ENCODE measurements at regions of chr18 and their contacts with region 1.

Region 1: GRCh38 chr18:42229211-42230210 is 274.5 kb downstream of the PIK3C3 start:
- DNase-seq: no peak
- ATAC-seq: peak in 1 of 8 donors; percentile 16
- H3K4me3 ChIP-seq: no peak overlapping the region
- H3K27ac ChIP-seq: no peak overlapping the region
- H3K4me1 ChIP-seq: no peaks in the 10 kb centered on the region
- H3K27me3 ChIP-seq: no peaks in the 10 kb centered on the region
- CTCF ChIP-seq: no peak

Region 2: GRCh38 chr18:41992066-41992465 is 237.4 kb before region 1 on chr18:
- intact Hi-C with region 1: no loop called
- DNase-seq: no peak
- ATAC-seq: no peak
- H3K4me3 ChIP-seq: no peak overlapping the region
- H3K27ac ChIP-seq: no peak overlapping the region
- H3K4me1 ChIP-seq: no peaks in the 10 kb centered on the region
- H3K27me3 ChIP-seq: no peaks in the 10 kb centered on the region
- CTCF ChIP-seq: no peak

Region 3: DNA sequence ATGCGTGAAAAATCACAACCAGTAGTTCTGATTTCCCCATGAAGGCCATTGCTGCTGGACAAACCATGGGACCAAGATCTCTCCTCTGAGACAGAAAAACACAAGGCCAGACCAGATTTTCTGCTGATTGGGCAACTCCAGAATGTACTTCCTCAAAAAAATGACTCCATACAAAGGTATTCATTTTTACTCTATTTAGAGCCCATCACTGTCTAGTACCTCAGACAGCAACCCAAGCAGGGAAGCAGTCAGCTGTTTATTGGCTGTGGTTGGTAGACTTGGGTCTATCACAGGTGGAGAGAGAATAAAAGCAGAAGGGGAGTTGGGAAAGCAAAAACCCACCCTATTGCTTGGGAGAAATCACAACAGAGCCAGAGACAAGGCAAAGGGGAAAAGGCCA is 54.6 kb before region 1 on chr18:
- intact Hi-C with region 1: loop called in 1 of 10 experiments (anchors 10 kb)
- DNase-seq: no peak
- ATAC-seq: no peak
- H3K4me3 ChIP-seq: no peak overlapping the region
- H3K27ac ChIP-seq: no peak overlapping the region
- H3K4me1 ChIP-seq: no peaks in the 10 kb centered on the region
- H3K27me3 ChIP-seq: no peaks in the 10 kb centered on the region
- CTCF ChIP-seq: no peak

Measured in heart right ventricle (tissue), 16 donors.